ENCODE measurements at regions of chr21 and their contacts with region 1.

Region 1: DNA sequence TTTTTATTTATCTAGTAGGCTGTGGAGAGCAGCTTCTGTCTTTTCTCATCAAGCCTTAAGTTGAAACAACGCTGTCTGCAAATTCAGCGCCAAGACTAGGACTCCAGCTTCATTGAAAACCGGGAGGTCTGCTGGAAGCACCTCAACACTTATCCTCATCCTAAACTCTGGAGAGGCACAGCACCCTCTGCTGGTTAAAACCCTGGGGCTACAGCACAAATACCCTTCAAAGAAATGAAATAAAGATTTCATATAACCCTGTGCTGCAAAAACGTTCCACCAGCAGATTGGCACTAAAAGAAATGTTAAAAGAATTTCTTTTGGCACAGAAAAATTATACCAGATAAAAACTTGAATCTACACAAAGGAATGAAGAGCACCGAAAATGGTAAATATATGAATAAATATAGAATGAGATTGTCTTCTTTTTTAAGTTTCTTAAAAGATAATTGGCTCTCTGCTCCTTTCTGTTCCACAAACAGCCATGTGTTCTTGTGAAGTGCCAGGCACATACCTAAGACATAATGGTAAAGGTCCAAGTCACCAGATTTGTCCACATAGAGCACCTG is 227.7 kb upstream of the SAMSN1 start:
- DNase-seq: peak; percentile 80
- H3K4me3 ChIP-seq: no peak overlapping the region
- H3K27ac ChIP-seq: no peak overlapping the region
- H3K4me1 ChIP-seq: no peaks in the 10 kb centered on the region
- H3K27me3 ChIP-seq: no peaks in the 10 kb centered on the region
- CTCF ChIP-seq: peak; percentile 68

Region 2: DNA sequence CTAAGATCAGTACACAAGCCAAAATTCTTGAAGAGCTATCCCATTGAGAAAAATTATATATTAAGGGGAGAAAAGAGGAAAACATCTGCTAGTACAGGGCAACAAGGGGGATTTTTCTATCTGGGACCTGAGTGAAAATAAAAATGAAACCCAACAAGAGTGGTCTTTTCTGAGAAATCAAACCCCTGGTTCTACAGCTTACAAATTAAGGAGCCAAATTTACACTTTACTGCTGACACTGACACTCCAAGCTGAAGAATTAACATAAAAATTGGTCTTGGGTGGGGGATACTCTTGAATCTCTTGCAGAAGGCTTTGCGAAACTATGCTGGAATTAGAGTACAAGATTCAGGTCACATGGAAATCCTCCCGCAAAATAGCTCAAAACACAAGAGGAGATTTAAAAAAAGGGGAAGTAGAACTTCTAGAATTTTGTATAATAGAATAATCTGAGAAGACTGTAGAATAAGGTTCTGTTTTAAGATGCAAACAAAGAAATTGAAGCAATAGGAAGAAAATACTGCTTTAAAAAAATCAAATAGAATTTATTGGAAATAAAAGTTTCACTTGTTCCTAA is 358.8 kb before region 1 on chr21:
- intact Hi-C with region 1: loop called (anchors 10 kb)
- DNase-seq: no peak
- H3K4me3 ChIP-seq: no peak overlapping the region
- H3K27ac ChIP-seq: no peak overlapping the region
- H3K4me1 ChIP-seq: no peaks in the 10 kb centered on the region
- H3K27me3 ChIP-seq: no peaks in the 10 kb centered on the region
- CTCF ChIP-seq: no peak

Region 3: DNA sequence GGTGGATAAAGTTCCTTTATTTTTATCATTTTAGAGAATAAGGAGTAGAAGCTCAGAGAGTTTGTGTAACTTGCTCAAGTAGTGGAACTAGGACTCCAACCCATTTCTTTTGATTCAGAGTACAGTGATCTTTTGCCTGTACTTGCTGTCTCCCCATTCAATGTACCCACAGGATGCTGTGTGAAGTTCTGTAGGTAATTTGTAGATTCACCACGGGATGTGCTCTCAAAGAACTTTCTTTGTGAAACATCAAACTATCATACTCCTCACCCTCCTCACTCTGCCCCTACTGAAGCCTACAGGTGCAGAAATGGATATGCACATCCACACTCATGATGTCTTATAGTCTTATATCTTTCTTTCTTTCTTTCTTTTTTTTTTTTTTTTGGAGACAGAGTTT is 325.1 kb before region 1 on chr21:
- intact Hi-C with region 1: loop called (anchors 10 kb)
- DNase-seq: no peak
- H3K4me3 ChIP-seq: no peak overlapping the region
- H3K27ac ChIP-seq: no peak overlapping the region
- H3K4me1 ChIP-seq: no peaks in the 10 kb centered on the region
- H3K27me3 ChIP-seq: no peaks in the 10 kb centered on the region
- CTCF ChIP-seq: no peak

Region 4: GRCh38 chr21:14989359-14989758 is 215.5 kb after region 1 on chr21:
- intact Hi-C with region 1: no loop called
- DNase-seq: no peak
- H3K4me3 ChIP-seq: no peak overlapping the region
- H3K27ac ChIP-seq: no peak overlapping the region
- H3K4me1 ChIP-seq: no peaks in the 10 kb centered on the region
- H3K27me3 ChIP-seq: no peaks in the 10 kb centered on the region
- CTCF ChIP-seq: no peak

Measured in colonic mucosa (tissue), 4 donors.